ENCODE measurements at regions of chr16 and their contacts with region 1.

Region 1: DNA sequence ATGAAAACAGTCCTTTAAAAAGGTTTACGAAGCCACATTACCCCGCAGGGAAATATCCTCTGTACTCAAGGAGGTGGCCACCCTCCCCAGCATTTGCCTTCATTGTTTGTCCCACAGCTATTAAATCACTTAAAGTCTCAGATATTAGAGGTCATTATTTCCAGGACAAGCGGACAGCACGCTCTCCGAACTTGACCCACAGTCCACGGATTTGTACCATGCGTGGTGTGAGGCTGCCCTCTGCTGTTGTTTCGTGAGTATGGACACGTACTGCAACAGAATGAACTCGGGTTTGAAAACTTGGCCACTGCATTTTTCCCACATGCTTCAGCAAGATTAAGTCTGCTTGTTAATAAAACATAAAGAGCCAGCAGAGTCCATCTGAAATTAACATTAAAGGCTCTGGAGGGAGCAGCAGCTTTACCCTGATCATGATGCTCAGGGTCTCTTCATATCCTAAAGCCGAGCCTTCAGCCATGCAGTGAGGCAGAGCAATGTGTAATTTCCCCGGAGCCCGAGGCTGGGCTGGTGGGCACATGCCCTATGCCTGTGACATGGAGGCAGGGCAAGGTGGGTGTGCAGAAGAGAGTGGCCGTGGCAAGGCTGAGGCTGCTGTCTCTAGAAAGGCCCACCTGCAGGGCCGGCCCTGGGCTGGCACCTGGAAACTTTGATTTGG is 19.7 kb downstream of the MEAK7 start:
- DNase-seq: peak; percentile 53 to 77 (median 67)
- ATAC-seq: peak in 3 of 4 donors; percentile 79 to 89 (median 83)
- H3K4me3 ChIP-seq: no peak overlapping the region
- H3K27ac ChIP-seq: no peak overlapping the region
- H3K4me1 ChIP-seq: peaks cover 0 to 8% (median 0%) of the 10 kb centered on the region in 12 donors
- H3K27me3 ChIP-seq: no peaks in the 10 kb centered on the region
- CTCF ChIP-seq: peak; percentile 69 to 87 (median 83)
- POLR2A ChIP-seq: no peak

Region 2: DNA sequence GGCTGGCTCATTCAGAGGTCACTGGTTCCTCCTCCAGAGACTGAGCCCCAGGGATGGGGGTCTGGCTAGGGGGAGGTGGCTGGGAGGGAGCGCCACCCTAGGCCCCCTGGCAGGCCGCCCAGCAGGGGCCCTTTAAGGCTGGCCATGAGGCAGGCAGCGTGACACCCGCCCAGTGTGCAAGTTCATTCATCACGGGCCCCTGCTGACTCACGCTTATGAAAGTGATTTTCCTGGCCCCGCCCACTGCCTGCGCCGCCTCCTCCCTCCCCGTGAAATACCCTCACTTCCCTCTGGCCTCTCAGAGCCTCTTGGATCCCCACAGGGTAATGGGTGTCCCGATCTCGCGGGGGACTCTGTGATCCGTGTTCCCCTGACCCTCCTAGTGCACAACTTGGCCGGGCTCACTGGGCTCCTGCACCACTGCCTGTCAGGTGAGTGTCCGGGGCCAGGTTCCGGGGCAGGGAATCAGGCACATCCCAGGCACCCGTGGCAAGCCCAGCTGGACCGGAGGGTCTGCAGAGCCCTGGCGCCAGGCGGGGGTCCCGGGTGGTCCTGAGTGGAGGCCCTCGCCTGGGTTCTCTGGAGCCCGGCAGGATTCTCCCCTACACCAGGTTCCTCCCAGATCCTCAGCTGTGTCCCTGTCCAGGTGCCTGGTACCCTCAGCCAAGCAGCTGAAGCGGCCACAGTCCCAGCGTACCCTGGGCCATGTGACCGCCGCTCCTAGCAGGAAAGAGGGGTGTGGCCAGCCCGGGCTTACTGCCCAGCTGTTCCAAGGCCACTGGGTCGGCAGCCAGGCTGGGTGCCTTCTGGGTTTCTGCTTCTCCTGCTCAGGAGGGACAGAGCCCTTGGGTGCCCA is 531.5 kb before region 1 on chr16 and contains the start of gene OSGIN1:
- intact Hi-C with region 1: loop called in 6 of 10 experiments (anchors 5 to 10 kb)
- DNase-seq: peak; percentile 92 to 96 (median 93)
- ATAC-seq: peak; percentile 89 to 94 (median 92)
- H3K4me3 ChIP-seq: peak within 1 kb of the TSS; percentile 36 to 87 (median 63)
- H3K27ac ChIP-seq: peak within 1 kb of the TSS; percentile 64 to 99 (median 94)
- H3K4me1 ChIP-seq: peaks cover 0 to 49% (median 28%) of the 10 kb centered on the region in 12 donors
- H3K27me3 ChIP-seq: no peaks in the 10 kb centered on the region
- CTCF ChIP-seq: no peak
- POLR2A ChIP-seq: peak; percentile 48 to 94
- total RNA-seq, gene OSGIN1: 3.3 to 11.0 (median 7.0) TPM

Region 3: GRCh38 chr16:84072014-84072413 is 412.7 kb before region 1 on chr16:
- intact Hi-C with region 1: loop called in 1 of 10 experiments (anchors 10 kb)
- DNase-seq: no peak
- ATAC-seq: no peak
- H3K4me3 ChIP-seq: no peak overlapping the region
- H3K27ac ChIP-seq: peak overlapping the region in 2 of 12 donors; percentile 24 to 41
- H3K4me1 ChIP-seq: peaks cover 0 to 29% (median 6%) of the 10 kb centered on the region in 12 donors
- H3K27me3 ChIP-seq: no peaks in the 10 kb centered on the region
- CTCF ChIP-seq: no peak
- POLR2A ChIP-seq: no peak

Region 4: DNA sequence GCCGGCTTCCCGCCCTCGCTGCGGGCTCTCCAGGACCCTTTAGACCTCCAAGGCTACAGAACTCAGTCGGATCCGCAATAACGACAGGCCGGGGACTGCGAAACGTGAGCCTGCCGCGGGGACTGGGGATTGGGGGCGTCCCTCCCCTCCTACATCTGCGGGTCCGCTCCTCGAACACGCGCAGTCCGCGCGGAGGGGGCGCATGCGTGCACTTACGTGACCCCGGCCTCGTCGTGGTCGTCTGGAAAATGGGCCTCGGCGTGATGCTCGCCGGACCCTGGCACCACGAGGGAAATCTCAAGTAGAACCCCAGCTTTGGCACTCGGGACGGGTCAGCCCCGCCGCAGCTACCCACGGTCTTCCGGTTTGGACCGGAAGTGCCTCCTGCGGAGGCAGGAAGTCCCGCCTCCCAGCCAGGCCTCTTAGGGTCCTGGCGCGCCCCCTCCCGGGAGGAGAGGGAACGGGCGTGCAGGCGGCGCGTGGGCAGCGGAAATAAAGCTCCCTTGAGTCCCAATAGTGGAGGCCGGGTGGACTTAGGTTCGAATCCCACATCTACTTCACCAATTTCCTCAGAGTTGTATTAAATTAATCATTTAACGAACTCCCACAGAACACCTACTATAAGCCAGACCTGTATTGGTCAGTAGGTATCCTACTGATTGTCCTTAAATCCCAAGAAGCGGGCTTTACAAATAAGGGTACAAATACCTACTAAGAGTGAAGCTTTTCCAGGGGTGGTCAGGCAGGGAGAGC is 297.9 kb before region 1 on chr16 and contains the start of gene TAF1C:
- intact Hi-C with region 1: loop called in 3 of 10 experiments (anchors 10 kb)
- DNase-seq: peak; percentile 90 to 95 (median 92)
- ATAC-seq: peak; percentile 82 to 95 (median 94)
- H3K4me3 ChIP-seq: peak within 1 kb of the TSS; percentile 62 to 100 (median 87)
- H3K27ac ChIP-seq: peak within 1 kb of the TSS; percentile 56 to 90 (median 82)
- H3K4me1 ChIP-seq: peaks cover 0 to 45% (median 16%) of the 10 kb centered on the region in 12 donors
- H3K27me3 ChIP-seq: no peaks in the 10 kb centered on the region
- CTCF ChIP-seq: peak in 11 of 12 donors; percentile 92 to 99 (median 98)
- POLR2A ChIP-seq: peak in 1 of 2 donors; percentile 46
- total RNA-seq, gene TAF1C: 16.3 to 24.3 (median 21.8) TPM

Region 5: DNA sequence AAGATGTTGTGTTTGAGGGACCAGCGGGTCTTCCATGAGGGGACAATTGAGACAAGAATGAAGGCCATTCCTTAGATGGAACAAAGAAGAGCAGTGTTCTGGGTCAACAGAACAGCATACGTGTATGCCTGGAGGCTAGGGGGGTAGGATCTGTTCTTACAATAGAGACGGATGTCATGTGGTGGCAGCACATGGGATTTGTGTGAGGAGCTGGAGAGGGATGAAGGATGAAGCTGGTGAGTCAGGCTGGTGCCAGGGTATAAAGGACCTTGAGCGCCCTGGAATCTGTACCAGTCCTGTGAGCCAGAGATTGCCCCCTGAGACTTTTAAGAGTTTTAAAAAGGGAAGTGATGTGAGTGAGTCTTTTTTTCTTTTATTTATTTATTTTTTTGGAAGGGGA is 212.9 kb before region 1 on chr16:
- intact Hi-C with region 1: loop called in 9 of 10 experiments (anchors 1 to 2 kb)
- DNase-seq: no peak
- ATAC-seq: no peak
- H3K4me3 ChIP-seq: no peak overlapping the region
- H3K27ac ChIP-seq: no peak overlapping the region
- H3K4me1 ChIP-seq: no peaks in the 10 kb centered on the region
- H3K27me3 ChIP-seq: peaks cover 0 to 21% (median 0%) of the 10 kb centered on the region in 9 donors
- CTCF ChIP-seq: no peak
- POLR2A ChIP-seq: no peak

Region 6: DNA sequence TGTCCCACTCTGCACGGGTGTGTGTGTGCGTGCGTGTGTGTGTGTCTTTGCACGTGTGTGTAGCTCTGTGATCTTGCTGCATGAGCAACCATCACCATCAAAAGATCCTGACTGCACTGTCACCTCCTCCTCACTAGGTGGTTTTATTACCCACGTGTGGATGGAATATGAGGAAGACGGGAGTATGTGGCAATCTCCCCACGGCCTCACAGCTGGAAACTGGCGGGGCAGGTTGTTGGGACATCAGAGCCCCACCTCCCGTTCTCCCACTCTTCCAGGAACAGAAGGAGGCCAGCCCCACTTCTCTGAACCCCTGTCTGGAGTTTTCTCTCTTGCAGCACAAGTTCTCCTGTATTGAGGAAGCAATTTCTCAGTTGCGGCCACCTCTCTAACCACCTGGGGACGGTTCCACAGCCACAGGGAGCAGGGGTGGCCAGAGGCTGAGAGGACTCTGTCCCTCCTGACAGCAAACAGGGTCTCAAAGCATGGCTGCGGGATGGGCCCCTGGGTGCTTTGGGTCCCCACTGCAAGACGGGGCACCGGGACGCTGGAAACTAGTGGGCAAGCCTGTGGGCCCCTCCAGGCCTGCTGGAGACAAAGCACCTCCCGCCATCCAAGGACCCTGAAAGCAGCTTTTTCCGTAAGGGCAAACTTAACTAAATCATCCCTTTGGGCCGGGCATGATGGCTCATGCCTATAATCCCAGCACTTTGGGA is 144.2 kb before region 1 on chr16:
- intact Hi-C with region 1: no loop called
- DNase-seq: no peak
- ATAC-seq: no peak
- H3K4me3 ChIP-seq: no peak overlapping the region
- H3K27ac ChIP-seq: no peak overlapping the region
- H3K4me1 ChIP-seq: no peaks in the 10 kb centered on the region
- H3K27me3 ChIP-seq: no peaks in the 10 kb centered on the region
- CTCF ChIP-seq: no peak
- POLR2A ChIP-seq: no peak

Region 7: DNA sequence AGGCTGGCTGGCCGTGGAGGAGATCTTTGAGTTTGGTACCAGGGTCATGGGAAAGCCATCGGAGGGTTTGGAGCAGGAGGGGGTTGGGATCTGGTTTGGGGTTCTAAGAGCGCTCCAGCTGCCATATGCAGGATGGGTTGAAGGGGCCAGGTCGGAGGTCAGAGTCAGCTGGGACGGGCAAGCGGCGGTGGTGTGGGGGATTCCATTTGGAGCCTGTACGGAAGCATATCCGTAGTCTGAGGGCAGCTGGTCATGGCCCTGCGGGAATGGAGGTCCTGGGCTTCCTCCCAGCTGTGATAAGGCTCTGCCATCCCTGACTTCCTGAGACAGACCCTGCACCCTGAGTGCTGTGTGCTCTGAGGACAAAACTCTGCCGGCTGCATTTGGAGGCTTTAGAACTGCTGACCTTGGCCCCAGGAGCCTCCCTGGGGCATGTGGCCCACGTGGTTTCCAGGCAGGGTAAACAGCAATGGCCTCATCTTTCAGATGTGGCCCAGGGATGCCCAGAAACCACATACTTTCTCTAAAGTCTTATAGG is 69.9 kb before region 1 on chr16:
- intact Hi-C with region 1: no loop called
- DNase-seq: peak in 1 of 5 donors; percentile 30
- ATAC-seq: peak in 2 of 4 donors; percentile 11 to 34
- H3K4me3 ChIP-seq: no peak overlapping the region
- H3K27ac ChIP-seq: no peak overlapping the region
- H3K4me1 ChIP-seq: peaks cover 0 to 6% (median 0%) of the 10 kb centered on the region in 12 donors
- H3K27me3 ChIP-seq: no peaks in the 10 kb centered on the region
- CTCF ChIP-seq: no peak
- POLR2A ChIP-seq: no peak

Region 8: DNA sequence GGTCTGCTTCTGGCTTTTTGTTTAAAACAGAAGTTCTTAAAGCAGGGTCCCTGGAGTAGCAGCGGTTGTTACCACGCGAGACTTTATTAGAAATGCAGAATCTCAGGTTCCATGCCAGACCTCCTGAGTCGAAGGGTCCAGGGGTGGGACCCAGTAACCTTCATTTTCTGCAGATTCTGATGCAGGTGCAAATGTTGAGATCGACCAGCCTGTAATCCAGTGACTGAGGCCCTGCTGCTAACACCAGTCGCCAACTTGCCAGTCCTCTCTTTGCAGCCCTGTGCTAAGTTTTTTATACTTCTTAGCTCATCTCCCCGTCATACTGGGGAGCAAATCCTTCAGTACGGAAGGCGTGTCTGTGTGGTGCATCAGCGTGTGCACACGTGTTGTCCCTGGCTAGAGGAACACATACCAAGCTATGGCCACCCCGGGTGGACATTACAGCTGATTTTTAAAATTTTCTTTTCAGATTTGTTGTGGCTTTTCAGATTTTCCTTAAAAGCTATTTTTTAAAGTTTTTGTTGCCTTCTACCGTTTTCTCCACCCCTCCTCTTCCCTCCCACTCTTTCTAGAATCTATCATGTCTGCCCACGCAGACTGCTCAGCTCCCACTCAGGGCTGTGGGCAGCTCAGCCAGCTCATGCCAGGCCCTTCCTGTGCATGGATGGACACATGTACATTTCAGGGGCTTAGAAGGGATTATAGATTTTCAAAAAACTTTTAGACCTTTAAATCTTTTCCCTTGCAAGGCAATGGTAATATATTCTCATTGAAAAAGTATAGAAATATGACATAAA is 37.9 kb before region 1 on chr16:
- intact Hi-C with region 1: no loop called
- DNase-seq: no peak
- ATAC-seq: no peak
- H3K4me3 ChIP-seq: no peak overlapping the region
- H3K27ac ChIP-seq: no peak overlapping the region
- H3K4me1 ChIP-seq: peaks cover 0 to 4% (median 0%) of the 10 kb centered on the region in 12 donors
- H3K27me3 ChIP-seq: peaks cover 0 to 11% (median 0%) of the 10 kb centered on the region in 9 donors
- CTCF ChIP-seq: no peak
- POLR2A ChIP-seq: no peak

Region 9: GRCh38 chr16:84511180-84511824 is 26.6 kb after region 1 on chr16:
- intact Hi-C with region 1: no loop called
- DNase-seq: peak; percentile 74 to 90 (median 82)
- ATAC-seq: peak; percentile 62 to 87 (median 82)
- H3K4me3 ChIP-seq: no peak overlapping the region
- H3K27ac ChIP-seq: no peak overlapping the region
- H3K4me1 ChIP-seq: peaks cover 0 to 42% (median 5%) of the 10 kb centered on the region in 12 donors
- H3K27me3 ChIP-seq: no peaks in the 10 kb centered on the region
- CTCF ChIP-seq: peak; percentile 94 to 99 (median 98)
- POLR2A ChIP-seq: peak in 1 of 2 donors; percentile 15

Measured in heart left ventricle (tissue), 16 donors.